ENCODE measurements at regions of chr18 and their contacts with region 1.

Region 1: DNA sequence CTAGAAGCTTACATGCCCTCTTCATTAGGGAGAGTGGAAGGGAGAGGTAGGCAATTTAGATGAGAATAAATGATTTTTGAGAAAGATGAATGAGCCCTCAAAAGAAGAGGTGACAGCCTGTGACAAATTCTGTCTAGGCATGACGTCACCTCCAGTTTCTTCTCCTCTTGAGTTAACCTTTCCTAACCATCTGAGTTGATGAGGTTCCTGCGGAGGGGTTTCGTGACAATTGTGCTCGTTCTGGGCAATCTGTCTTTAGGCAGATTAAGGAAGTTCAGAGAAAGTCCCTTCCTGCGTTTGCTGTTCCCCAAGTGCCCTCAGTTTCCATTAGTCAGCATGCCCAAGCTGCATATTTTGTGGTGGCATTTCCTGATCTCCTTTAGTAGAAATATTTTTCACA is 640.2 kb upstream of the SYT4 start:
- DNase-seq: no peak
- H3K4me3 ChIP-seq: no peak overlapping the region
- H3K27ac ChIP-seq: no peak overlapping the region
- H3K4me1 ChIP-seq: no peaks in the 10 kb centered on the region
- H3K27me3 ChIP-seq: no peaks in the 10 kb centered on the region
- CTCF ChIP-seq: no peak
- POLR2A ChIP-seq: no peak

Region 2: DNA sequence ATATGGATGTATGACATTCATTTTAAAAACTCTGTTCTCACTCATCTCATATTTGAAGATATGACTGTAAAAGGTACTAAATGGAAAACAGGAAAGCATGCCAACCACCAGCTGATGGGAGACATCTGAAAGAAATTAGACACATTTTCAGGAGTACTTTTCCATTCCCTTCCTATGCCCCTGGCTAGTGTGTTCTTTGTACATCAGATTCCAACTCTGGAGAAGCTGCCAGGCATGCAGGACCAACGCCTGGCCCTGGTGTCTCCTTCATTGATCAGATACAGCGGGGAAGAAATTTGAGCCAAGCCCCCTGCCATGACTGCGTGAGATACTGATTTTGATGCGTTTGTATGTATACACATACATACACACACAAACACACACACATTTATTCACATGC is 41.2 kb before region 1 on chr18:
- intact Hi-C with region 1: loop called (anchors 1 kb)
- DNase-seq: no peak
- H3K4me3 ChIP-seq: no peak overlapping the region
- H3K27ac ChIP-seq: peak overlapping the region; percentile 56
- H3K4me1 ChIP-seq: peaks cover 12% of the 10 kb centered on the region
- H3K27me3 ChIP-seq: no peaks in the 10 kb centered on the region
- CTCF ChIP-seq: no peak
- POLR2A ChIP-seq: no peak